ENCODE measurements at regions of chr14 and their contacts with region 1.

Region 1: DNA sequence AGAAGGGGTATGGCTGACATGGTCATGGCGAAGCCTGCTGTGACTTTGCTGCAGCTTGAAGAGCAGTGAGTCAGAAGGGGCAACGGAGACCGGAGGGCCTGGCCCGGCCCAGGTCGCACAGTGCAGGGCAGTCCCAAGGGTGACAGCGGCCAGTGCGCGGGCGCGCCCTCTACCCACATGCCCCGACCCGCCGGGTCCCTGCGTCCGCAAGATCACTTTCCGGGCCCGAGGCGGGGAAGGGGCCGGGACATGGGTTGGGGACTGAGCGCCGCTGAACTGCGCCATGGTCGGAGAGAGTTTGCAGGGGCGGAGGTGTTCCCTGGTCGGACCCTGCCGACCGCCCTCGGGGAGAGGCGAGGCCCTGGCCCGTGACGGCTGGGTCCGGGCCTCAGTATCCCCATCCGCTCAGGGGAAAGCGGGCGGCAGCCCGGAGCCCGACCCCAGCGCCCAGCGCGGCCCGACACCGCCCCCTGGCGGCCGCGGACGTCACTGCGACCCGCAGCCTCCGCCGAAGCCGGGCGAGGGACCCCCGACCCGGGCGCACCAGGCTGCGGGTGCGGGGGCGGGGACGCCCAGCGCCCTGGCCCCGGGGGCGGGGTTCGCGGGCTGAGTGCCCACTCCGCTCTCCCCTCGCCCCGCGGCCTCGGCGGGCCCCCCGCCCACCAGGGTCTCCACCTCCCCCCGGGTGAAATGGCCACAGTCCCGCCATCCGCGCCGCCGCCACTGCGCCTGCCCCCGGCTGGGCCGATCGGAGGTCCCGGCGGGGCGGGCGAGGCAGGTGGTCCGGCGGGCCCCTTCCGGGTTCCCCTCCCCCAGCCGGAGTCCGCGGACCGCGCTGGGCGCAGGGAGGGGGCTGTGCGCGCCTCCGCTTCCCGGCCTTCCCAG is 7.2 kb upstream of the ANKRD9 start:
- DNase-seq: peak; percentile 93
- H3K4me3 ChIP-seq: peak overlapping the region; percentile 38 to 84 (median 60)
- H3K27ac ChIP-seq: peak overlapping the region in 4 of 8 donors; percentile 12 to 75 (median 65)
- H3K4me1 ChIP-seq: peaks cover 3 to 18% (median 12%) of the 10 kb centered on the region in 6 donors
- H3K27me3 ChIP-seq: peaks cover 0 to 8% (median 0%) of the 10 kb centered on the region in 7 donors
- CTCF ChIP-seq: peak in 10 of 11 experiments; percentile 29 to 98 (median 88)
- POLR2A ChIP-seq: no peak

Region 2: GRCh38 chr14:102437997-102438915 is 78.5 kb before region 1 on chr14:
- intact Hi-C with region 1: loop called (anchors 2 kb)
- DNase-seq: peak; percentile 88
- H3K4me3 ChIP-seq: peak overlapping the region in 4 of 8 donors; percentile 13 to 47 (median 24)
- H3K27ac ChIP-seq: no peak overlapping the region
- H3K4me1 ChIP-seq: peaks cover 0 to 13% (median 5%) of the 10 kb centered on the region in 6 donors
- H3K27me3 ChIP-seq: no peaks in the 10 kb centered on the region
- CTCF ChIP-seq: peak; percentile 13 to 91 (median 76)
- POLR2A ChIP-seq: no peak

Region 3: DNA sequence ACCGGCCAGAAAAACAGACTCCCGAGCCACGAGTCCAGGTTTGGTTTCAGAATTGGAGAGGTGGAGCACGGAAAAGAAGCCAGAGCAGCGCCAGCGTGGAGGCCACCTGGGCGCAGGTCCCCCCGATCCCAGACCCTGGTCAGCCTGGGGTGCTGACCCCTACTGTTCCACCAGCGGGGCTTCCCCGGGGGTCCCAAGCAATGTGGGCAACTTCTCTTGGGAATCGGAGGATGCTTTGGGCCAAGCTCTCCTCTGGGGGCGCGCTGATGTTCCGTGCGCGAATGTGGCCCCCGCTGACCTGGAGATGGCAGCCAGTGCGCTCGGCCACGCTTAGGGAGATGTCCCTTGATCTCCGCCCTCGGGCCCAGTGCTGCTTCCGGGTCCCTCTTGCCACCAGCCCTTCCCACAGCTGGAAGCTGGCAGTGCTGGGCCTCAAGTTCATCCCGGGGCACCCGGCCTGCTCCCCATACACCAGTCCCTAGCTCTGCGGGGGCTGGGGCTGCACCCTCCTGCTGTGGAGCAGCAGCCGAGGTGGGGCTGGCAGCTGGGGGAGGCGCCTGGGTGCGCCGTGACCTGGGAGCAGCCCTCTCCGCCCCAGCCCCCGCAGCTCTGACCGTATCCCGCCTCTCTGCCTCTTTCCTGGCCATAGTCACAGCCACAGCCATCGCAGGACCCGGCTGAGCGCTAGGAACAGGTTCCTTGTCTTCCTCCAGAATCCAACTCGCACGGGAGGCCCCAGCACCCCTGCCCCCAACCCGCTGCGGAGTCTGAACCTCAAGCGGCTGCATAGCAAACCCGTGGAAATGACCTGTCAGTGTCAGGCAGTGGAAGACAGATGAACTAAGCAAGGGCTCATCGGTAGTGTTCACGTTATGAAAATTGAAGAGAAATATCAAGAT is 166.9 kb after region 1 on chr14:
- intact Hi-C with region 1: no loop called
- DNase-seq: no peak
- H3K4me3 ChIP-seq: no peak overlapping the region
- H3K27ac ChIP-seq: no peak overlapping the region
- H3K4me1 ChIP-seq: peaks cover 3 to 22% (median 13%) of the 10 kb centered on the region in 6 donors
- H3K27me3 ChIP-seq: no peaks in the 10 kb centered on the region
- CTCF ChIP-seq: no peak
- POLR2A ChIP-seq: no peak